ENCODE measurements at regions of chr21 and their contacts with region 1.

Region 1: GRCh38 chr21:32826329-32827167 is 55.0 kb upstream of the PAXBP1 start:
- DNase-seq: peak; percentile 65
- H3K4me3 Mint-ChIP-seq: no peak overlapping the region
- H3K27ac Mint-ChIP-seq: no peak overlapping the region
- H3K4me1 Mint-ChIP-seq: no peaks in the 10 kb centered on the region
- H3K27me3 Mint-ChIP-seq: peaks cover 2% of the 10 kb centered on the region

Region 2: DNA sequence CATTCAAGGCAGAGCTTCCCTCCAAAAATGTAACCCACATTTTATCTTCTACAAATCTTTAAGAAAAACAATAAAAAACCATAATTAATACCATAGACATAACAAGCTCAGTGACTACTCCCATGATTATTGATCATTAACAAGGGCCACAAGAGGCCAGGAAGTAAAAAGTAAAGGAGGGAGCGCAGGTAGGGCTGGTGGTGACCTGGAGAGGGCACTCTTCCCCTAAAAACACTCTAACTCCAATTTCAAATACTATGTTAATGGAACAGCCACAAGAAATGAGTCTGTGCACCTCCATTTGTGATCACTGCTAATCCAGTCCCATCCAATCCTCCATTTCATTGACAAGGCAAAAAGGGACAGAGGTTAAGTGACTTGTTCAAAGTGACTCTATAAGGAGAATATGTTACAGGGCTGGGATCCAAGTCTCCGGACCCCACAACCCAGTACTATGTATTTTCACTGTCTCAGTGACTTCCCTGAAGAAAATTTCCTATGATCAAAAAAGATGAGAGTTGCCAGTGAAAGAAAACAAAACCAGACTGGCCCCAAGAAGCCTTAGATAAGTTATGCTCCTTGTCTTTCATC is 173.1 kb before region 1 on chr21:
- CTCF ChIA-PET with region 1: interaction called, 18 read pairs
- intact Hi-C with region 1: loop called (anchors 1 kb)
- DNase-seq: peak; percentile 50
- H3K4me3 Mint-ChIP-seq: no peak overlapping the region
- H3K27ac Mint-ChIP-seq: no peak overlapping the region
- H3K4me1 Mint-ChIP-seq: peaks cover 3% of the 10 kb centered on the region
- H3K27me3 Mint-ChIP-seq: no peaks in the 10 kb centered on the region

Region 3: DNA sequence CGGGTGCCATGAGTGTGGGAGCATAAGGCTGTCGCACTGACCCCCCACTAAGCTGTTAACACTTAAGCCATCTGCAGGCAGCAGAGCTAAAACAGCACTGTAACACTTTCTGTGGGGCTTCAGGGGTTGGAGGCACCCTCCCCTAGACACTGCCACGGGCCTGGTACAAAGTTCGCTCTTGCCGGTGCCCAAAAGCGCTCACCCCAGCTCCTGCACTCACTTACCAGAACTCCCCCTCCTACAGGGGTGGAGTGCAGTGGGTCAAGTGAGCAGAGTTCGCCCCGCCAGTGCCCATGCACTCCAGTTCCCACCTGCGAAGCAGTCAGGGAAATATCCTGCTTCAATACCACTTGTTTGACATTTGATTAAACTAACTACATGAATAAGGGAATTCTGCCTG is 168.0 kb before region 1 on chr21:
- CTCF ChIA-PET with region 1: interaction called, 18 read pairs
- intact Hi-C with region 1: loop called (anchors 1 kb)
- DNase-seq: no peak
- H3K4me3 Mint-ChIP-seq: no peak overlapping the region
- H3K27ac Mint-ChIP-seq: no peak overlapping the region
- H3K4me1 Mint-ChIP-seq: no peaks in the 10 kb centered on the region
- H3K27me3 Mint-ChIP-seq: no peaks in the 10 kb centered on the region

Region 4: DNA sequence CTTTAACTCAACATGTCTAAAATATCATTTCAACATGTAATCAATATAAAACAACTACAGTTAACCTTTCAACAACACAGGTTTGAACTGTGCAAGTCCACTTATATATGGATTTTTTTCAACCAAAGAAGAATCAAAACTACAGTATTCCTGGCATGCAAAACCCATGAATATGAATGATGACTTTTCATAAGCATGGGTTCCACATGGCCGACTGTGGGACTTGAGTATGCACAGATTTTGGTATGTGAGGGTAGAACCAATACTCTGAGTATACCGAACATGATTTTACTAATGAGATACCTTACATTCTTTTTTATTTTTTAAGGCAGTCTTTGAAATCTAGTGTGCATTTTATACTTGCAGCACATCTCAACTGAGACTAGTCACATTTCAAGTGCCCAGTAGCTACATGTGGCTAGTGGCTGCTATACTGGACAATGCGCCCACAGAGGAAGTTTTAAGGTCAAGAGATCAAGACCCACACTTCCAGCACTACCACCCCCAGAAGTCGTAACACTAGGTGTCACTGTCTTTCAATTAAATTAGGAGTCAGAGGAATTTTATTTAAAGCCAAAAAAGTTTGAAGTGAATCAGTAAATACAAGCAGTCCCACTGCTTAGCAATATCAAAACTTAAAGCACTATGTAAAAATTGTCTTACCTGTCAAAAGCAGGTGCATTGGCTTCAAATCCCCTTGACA is 138.8 kb before region 1 on chr21:
- CTCF ChIA-PET with region 1: interaction called, 6 read pairs
- intact Hi-C with region 1: loop called (anchors 1 kb)
- DNase-seq: no peak
- H3K4me3 Mint-ChIP-seq: no peak overlapping the region
- H3K27ac Mint-ChIP-seq: no peak overlapping the region
- H3K4me1 Mint-ChIP-seq: no peaks in the 10 kb centered on the region
- H3K27me3 Mint-ChIP-seq: no peaks in the 10 kb centered on the region

Region 5: GRCh38 chr21:32712043-32712442 is 114.5 kb before region 1 on chr21:
- CTCF ChIA-PET with region 1: no interaction called
- intact Hi-C with region 1: no loop called
- DNase-seq: peak; percentile 21
- H3K4me3 Mint-ChIP-seq: no peak overlapping the region
- H3K27ac Mint-ChIP-seq: no peak overlapping the region
- H3K4me1 Mint-ChIP-seq: peaks cover 23% of the 10 kb centered on the region
- H3K27me3 Mint-ChIP-seq: no peaks in the 10 kb centered on the region